MCF 10A (cell line): ENCODE measurements at regions of chr22 and their contacts with region 1.

Region 1: DNA sequence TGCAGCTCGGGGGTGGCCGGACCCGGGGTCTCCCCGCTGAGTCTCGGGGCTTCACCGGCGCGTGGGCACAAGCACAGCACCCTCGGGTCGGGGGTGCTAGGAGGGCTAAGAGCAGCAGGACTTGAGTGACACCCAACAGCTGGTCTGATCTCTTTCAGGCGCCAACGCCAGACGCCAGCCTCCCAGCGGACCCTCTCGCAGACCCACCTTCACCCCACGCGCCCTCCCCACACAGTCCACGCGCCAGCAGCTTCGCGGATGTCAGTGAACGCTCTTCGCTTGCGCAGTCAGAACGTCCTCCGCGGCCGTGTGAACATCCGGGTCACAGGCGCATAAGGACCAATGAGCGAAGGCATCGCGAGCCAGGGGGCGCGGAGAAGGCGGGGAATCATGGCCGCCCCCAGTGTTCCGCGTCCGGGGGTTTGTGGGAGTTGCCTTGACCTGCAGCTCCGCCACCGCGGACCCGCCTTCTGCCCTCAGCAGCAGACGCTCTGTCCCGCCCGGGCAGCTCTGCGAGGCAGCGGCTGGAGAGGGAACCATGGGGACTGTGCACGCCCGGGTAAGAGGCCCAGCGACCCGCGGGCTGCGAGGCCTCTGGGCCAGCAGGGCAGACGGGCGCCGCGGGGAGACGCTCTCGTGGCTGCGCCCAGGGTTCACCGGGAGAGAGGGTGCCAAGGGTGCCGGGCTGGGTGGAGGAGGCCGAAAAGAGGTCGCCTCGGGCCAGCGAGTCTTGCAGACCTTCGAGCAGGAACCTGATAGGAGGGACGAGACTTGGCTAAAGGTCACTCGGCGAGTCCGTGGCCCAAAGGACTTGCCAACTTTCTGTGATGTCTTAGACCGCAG is at the start of gene SAMM50:
- DNase-seq: peak; percentile 93
- H3K4me3 Mint-ChIP-seq: peak within 1 kb of the TSS; percentile 90
- H3K27ac Mint-ChIP-seq: peak within 1 kb of the TSS; percentile 92
- H3K4me1 Mint-ChIP-seq: peaks cover 24% of the 10 kb centered on the region
- H3K27me3 Mint-ChIP-seq: no peaks in the 10 kb centered on the region
- CTCF ChIP-seq: no peak
- total RNA-seq, gene SAMM50: 26.1 and 29.5 TPM in 2 replicates

Region 2: GRCh38 chr22:43226377-43227238 is 728.7 kb before region 1 on chr22:
- CTCF ChIA-PET with region 1: no interaction called
- POLR2A ChIA-PET with region 1: no interaction called
- intact Hi-C with region 1: no loop called
- DNase-seq: no peak
- H3K4me3 Mint-ChIP-seq: no peak overlapping the region
- H3K27ac Mint-ChIP-seq: no peak overlapping the region
- H3K4me1 Mint-ChIP-seq: peaks cover 12% of the 10 kb centered on the region
- H3K27me3 Mint-ChIP-seq: peaks cover 29% of the 10 kb centered on the region
- CTCF ChIP-seq: no peak

Region 3: GRCh38 chr22:43435851-43436811 is 519.1 kb before region 1 on chr22:
- CTCF ChIA-PET with region 1: no interaction called
- POLR2A ChIA-PET with region 1: no interaction called
- intact Hi-C with region 1: no loop called
- DNase-seq: peak; percentile 4
- H3K4me3 Mint-ChIP-seq: no peak overlapping the region
- H3K27ac Mint-ChIP-seq: no peak overlapping the region
- H3K4me1 Mint-ChIP-seq: no peaks in the 10 kb centered on the region
- H3K27me3 Mint-ChIP-seq: peaks cover 84% of the 10 kb centered on the region
- CTCF ChIP-seq: no peak

Region 4: GRCh38 chr22:43921361-43921760 is 33.9 kb before region 1 on chr22:
- CTCF ChIA-PET with region 1: no interaction called
- POLR2A ChIA-PET with region 1: interaction called, 30 read pairs
- intact Hi-C with region 1: no loop called
- DNase-seq: peak; percentile 62
- H3K4me3 Mint-ChIP-seq: no peak overlapping the region
- H3K27ac Mint-ChIP-seq: no peak overlapping the region
- H3K4me1 Mint-ChIP-seq: peaks cover 46% of the 10 kb centered on the region
- H3K27me3 Mint-ChIP-seq: no peaks in the 10 kb centered on the region
- CTCF ChIP-seq: no peak

Region 5: DNA sequence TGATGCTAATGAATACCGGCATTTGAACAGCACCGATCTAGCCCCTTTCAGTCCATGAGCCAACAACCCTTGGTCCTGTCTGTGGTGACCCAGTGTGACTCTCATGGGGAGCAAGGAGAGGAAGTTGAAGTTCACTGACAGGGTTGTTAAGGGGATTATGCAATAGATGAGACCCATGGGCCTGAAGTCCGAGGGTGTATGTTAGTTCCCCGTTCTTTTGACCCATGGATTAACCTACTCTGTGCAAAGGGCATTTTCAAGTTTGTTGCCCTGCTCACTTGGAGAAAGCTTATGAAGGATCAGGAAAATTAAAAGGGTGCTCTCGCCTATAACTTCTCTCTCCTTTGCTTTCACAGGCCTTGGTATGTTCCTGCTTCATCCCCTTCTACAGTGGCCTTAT is 26.8 kb before region 1 on chr22:
- CTCF ChIA-PET with region 1: interaction called, 3 read pairs
- POLR2A ChIA-PET with region 1: interaction called, 30 read pairs
- intact Hi-C with region 1: no loop called
- DNase-seq: no peak
- H3K4me3 Mint-ChIP-seq: no peak overlapping the region
- H3K27ac Mint-ChIP-seq: no peak overlapping the region
- H3K4me1 Mint-ChIP-seq: peaks cover 19% of the 10 kb centered on the region
- H3K27me3 Mint-ChIP-seq: no peaks in the 10 kb centered on the region
- CTCF ChIP-seq: no peak

Region 6: GRCh38 chr22:44098083-44098739 is 142.9 kb after region 1 on chr22:
- CTCF ChIA-PET with region 1: no interaction called
- POLR2A ChIA-PET with region 1: no interaction called
- intact Hi-C with region 1: no loop called
- DNase-seq: no peak
- H3K4me3 Mint-ChIP-seq: no peak overlapping the region
- H3K27ac Mint-ChIP-seq: no peak overlapping the region
- H3K4me1 Mint-ChIP-seq: no peaks in the 10 kb centered on the region
- H3K27me3 Mint-ChIP-seq: no peaks in the 10 kb centered on the region
- CTCF ChIP-seq: no peak

Region 7: DNA sequence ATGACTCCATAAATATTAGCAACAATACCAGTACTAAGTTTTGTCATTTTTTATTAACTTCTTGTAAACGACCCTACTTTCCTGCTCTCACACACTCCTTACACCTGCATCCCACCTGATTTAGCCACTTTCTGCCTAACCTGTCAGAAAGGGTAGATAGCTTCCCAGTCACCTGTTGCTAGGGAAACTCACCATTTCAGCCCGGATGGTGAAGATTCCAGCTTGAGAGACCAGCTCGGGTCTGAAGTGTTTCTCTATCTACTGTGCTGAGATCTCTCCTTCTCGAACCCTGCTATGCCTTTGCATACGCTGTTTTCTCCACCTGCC is 225.4 kb after region 1 on chr22 and contains the start of gene PARVG:
- CTCF ChIA-PET with region 1: no interaction called
- POLR2A ChIA-PET with region 1: no interaction called
- intact Hi-C with region 1: no loop called
- DNase-seq: peak; percentile 13
- H3K4me3 Mint-ChIP-seq: no peak within 1 kb of the TSS
- H3K27ac Mint-ChIP-seq: no peak within 1 kb of the TSS
- H3K4me1 Mint-ChIP-seq: peaks cover 14% of the 10 kb centered on the region
- H3K27me3 Mint-ChIP-seq: peaks cover 69% of the 10 kb centered on the region
- CTCF ChIP-seq: no peak
- total RNA-seq, gene PARVG: 0.23 TPM in 1 of 2 replicates, not detected in the other